GM13977 (cell line): ENCODE measurements at regions of chr11 and their contacts with region 1.

Region 1: DNA sequence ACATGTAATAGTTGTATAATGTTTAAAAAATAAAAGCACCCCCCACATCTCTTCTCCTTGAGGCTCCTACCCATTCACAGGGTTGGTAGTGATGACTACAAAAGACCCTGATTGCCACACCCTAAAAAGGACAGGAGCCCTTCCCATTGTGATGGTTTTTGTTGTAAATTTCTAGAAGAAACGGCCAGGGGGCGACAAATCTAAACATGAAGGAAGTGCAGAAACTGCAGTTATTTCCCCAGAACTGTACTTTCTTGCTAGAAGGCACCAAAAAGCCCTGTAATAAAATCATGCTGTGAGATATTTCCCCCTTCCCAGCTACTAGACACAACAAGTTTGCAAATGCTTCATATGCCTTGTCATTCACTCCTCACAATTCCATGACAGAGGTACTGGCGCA is 10.8 kb downstream of the PRR5L start:
- DNase-seq: no peak
- CTCF ChIP-seq: peak; percentile 29

Region 2: GRCh38 chr11:36376888-36377758 is 70.2 kb after region 1 on chr11:
- in situ Hi-C with region 1: no loop called
- DNase-seq: peak; percentile 43
- CTCF ChIP-seq: peak; percentile 50

Region 3: DNA sequence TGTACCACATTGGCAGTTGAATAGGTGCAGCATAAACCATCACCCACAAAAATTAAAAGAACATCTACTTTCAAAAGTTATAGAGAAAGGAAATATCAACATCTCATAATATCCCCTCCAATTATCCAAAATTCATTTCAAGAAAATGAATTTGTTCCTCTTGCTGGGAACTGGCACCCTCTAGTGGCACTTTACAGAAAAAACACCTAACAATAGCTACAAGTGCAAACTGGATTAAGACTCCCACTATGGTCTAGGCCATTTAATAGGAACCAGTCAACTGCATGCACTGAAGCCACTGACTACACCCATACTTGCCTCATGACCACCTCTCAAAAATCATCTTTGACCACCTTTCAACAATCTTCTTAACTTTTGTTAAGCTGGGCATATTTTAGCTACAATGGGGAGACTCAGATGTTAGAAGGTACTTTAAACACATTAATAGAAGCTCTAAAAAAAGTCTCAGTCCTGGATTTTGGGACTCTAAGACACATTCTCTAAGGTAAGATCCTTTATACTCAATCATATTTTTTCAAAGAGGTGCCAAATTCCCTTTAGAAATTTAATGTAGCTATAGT is 185.9 kb after region 1 on chr11:
- in situ Hi-C with region 1: loop called (anchors 10 kb)
- DNase-seq: peak; percentile 47
- CTCF ChIP-seq: peak; percentile 74

Region 4: DNA sequence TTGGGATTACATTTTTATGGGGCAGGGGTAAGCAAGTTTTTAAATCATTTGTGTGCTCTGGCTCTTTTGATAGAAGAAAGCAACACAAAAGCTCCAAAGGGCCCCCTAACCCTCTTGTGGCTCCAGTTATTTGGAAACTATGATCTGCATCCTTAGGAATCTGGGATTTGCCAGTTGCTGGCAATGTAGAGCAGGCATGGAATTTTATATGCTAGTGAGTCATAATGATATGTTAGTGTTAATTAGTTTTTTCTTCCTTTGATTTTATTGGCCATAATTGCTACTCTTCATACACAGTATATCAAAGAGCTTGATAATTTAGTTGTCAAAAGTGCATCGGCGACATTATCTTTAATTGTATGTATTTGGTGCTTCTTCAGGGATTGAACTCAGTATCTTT is 271.0 kb after region 1 on chr11:
- in situ Hi-C with region 1: no loop called
- DNase-seq: no peak
- CTCF ChIP-seq: no peak